Mammary epithelial cell (primary cell): ENCODE measurements at regions of chr1 and their contacts with region 1.

Region 1: DNA sequence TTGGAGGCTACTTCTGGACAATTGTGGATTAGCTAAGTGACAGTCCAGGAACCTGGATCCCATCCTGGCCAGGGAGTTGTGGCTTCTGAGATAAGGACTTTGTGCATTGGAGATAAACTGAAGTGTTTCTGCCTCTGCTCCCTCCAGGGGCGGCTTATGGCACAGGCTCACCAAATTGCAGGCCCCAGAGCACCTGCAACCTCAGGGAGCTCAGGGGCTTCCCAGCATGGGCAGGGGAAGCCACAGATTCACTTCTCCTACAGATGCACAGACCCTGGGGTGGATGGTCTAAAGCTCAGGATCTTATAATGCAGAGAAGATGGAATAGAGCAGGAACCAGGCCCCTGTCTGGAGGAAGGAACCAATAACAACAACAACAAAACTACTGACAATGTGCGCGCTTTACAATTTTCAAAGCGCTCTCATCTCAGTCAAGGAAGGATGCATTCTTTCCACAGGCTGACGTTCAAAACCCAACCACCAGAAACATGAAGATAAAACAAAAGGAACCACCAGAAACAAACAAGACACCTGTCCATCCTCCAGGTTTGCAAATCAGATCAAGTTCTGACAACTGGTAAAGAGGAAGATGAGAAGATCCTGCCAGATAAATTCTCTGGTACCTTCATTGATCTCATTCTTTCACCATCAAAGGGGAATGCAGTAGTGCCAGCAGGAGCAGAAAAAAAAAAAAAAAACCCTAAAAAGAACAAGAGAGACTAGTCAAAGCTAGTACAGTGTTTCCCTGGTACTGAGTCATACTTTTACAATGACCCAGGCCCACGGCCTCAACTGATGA is 121.0 kb upstream of the IRF2BP2 start:
- DNase-seq: peak; percentile 93
- H3K4me3 ChIP-seq: no peak overlapping the region
- H3K27ac ChIP-seq: no peak overlapping the region
- H3K4me1 ChIP-seq: peaks cover 40% of the 10 kb centered on the region
- H3K27me3 ChIP-seq: no peaks in the 10 kb centered on the region
- CTCF ChIP-seq: no peak

Region 2: DNA sequence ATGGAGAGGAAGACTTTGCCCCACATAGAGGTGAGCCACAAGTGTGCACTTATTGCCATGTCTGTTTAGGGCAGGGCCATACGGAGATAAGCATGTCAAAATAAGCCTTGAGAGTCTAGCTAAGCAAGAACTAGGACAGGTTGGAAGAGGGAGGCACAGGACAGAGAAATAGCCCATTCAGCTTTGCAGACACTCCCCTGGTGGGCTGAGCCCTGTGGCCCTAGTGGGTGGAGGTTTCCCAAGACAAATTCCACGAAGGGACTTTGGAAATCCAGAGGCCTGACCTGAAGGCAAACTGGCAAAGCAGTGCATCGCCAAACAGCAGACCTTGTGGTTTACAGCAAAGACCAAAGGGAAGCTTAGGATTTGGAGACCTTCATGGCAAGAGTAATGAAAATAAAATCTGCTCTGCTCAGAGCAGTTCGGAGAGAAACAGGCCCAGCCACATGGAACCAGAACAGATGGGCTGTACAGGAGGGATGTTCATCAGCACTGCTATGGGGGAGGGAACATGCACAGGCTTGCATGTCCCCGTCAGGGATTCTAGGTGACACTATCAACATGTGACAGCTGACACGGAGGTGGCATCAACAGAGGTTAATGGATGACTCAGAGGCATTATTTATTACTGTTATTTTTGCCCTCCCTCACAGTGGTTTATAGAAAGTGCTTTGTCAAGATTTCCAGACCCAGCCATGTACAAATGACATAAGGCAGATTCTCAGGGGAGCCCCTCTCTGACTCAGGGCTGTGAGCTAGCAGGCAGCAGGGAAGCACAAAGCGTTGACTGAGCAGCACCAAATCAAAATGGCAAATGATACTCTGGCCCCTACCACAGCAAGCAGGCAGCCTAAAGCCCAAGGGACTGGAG is 30.9 kb before region 1 on chr1:
- CTCF ChIA-PET with region 1: no interaction called
- dilution Hi-C with region 1: no loop called
- in situ Hi-C with region 1: no loop called
- intact Hi-C with region 1: no loop called
- DNase-seq: peak; percentile 82
- H3K4me3 ChIP-seq: no peak overlapping the region
- H3K27ac ChIP-seq: no peak overlapping the region
- H3K4me1 ChIP-seq: peaks cover 12% of the 10 kb centered on the region
- H3K27me3 ChIP-seq: no peaks in the 10 kb centered on the region
- CTCF ChIP-seq: no peak

Region 3: DNA sequence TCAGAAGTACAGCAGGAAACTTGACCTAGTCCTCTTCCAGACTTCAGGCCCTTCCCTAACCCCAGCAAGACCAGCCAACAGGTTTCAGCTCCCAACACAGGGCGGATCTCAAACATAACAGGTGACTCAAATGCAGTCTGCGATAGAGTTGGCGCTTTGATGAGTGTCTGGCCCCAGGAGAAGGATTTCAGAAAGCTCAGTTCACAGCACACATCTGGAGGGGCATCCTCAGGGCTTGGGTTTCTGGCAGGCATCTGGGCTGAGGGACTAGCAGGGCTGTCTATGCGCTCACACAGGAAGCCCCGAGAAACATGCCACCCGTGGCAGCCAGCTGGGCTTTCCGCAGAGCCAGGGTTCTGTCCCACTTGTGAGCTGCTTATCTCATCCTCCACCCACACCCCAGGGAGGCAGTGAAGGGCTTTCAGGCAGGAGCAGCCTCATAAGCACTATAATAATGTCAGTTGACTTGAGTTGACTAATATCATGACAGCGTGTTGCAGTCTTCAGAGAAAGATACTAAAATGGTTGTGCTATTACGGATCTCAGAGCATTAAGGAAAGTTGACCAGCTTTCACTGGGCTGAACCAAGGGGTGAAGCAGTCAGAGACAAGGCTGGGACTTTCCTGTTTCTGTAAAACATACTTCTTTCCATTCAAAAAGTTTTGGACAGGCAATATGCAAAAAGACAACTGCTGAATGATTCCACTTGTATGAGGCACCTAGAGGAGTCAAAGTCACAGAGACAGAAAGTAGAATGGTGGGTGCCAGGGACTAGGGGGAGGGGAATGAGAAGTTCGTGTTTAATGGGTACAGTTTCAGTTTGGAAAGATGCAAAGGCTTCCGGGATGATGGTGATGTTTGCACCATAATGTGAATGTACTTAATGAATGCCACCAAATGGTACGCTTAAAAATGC is 112.0 kb after region 1 on chr1:
- CTCF ChIA-PET with region 1: no interaction called
- dilution Hi-C with region 1: no loop called
- in situ Hi-C with region 1: loop called in 1 of 2 experiments (anchors 25 kb)
- intact Hi-C with region 1: no loop called
- DNase-seq: no peak
- H3K4me3 ChIP-seq: no peak overlapping the region
- H3K27ac ChIP-seq: no peak overlapping the region
- H3K4me1 ChIP-seq: peaks cover 3% of the 10 kb centered on the region
- H3K27me3 ChIP-seq: no peaks in the 10 kb centered on the region
- CTCF ChIP-seq: no peak